Activated CD8-positive, alpha-beta T cell treated with anti-CD3 and anti-CD28 coated beads for 36 hours (primary cell): ENCODE measurements at regions of chr6 and their contacts with region 1.

Region 1: GRCh38 chr6:1604158-1605030 is 5.3 kb upstream of the FOXC1 start:
- DNase-seq: peak; percentile 58
- ATAC-seq: peak; percentile 76
- H3K4me3 Mint-ChIP-seq: no peak overlapping the region
- H3K27ac Mint-ChIP-seq: no peak overlapping the region
- H3K4me1 Mint-ChIP-seq: peaks cover 34% of the 10 kb centered on the region
- H3K27me3 Mint-ChIP-seq: peaks cover 78% of the 10 kb centered on the region
- CTCF ChIP-seq: peak; percentile 89

Region 2: DNA sequence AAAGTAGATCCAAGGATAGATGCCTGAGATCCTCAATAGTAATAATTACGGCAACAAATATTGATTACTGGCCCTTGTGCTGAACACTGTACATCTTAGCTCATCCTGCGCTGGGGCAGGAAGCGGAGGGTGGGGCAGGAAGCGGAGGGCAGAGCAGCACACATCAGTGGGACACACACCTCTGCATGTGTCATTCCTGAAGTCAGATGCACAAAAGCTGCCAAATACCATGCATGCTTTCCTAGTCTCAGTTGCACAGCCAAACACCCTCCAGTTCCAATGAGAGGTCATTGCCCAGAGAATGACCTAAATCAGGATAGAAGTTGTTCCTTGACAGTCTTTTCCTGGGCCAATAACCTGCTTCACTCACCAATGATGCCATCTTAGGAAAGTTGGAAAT is 69.1 kb before region 1 on chr6:
- CTCF ChIA-PET with region 1: no interaction called
- POLR2A ChIA-PET with region 1: no interaction called
- intact Hi-C with region 1: no loop called
- DNase-seq: peak; percentile 33
- ATAC-seq: peak; percentile 60
- H3K4me3 Mint-ChIP-seq: no peak overlapping the region
- H3K27ac Mint-ChIP-seq: no peak overlapping the region
- H3K4me1 Mint-ChIP-seq: peaks cover 6% of the 10 kb centered on the region
- H3K27me3 Mint-ChIP-seq: no peaks in the 10 kb centered on the region
- CTCF ChIP-seq: no peak

Region 3: GRCh38 chr6:1641323-1641885 is 37.0 kb after region 1 on chr6:
- CTCF ChIA-PET with region 1: no interaction called
- POLR2A ChIA-PET with region 1: no interaction called
- intact Hi-C with region 1: no loop called
- DNase-seq: no peak
- ATAC-seq: no peak
- H3K4me3 Mint-ChIP-seq: no peak overlapping the region
- H3K27ac Mint-ChIP-seq: no peak overlapping the region
- H3K4me1 Mint-ChIP-seq: no peaks in the 10 kb centered on the region
- H3K27me3 Mint-ChIP-seq: no peaks in the 10 kb centered on the region
- CTCF ChIP-seq: no peak

Region 4: GRCh38 chr6:1739680-1740079 is 135.3 kb after region 1 on chr6:
- CTCF ChIA-PET with region 1: no interaction called
- POLR2A ChIA-PET with region 1: no interaction called
- intact Hi-C with region 1: no loop called
- DNase-seq: no peak
- ATAC-seq: no peak
- H3K4me3 Mint-ChIP-seq: no peak overlapping the region
- H3K27ac Mint-ChIP-seq: no peak overlapping the region
- H3K4me1 Mint-ChIP-seq: no peaks in the 10 kb centered on the region
- H3K27me3 Mint-ChIP-seq: no peaks in the 10 kb centered on the region
- CTCF ChIP-seq: no peak

Region 5: GRCh38 chr6:2103644-2104523 is 499.5 kb after region 1 on chr6:
- CTCF ChIA-PET with region 1: interaction called, 8 read pairs
- POLR2A ChIA-PET with region 1: no interaction called
- intact Hi-C with region 1: loop called (anchors 5 kb)
- DNase-seq: no peak
- ATAC-seq: peak; percentile 69
- H3K4me3 Mint-ChIP-seq: no peak overlapping the region
- H3K27ac Mint-ChIP-seq: no peak overlapping the region
- H3K4me1 Mint-ChIP-seq: peaks cover 1% of the 10 kb centered on the region
- H3K27me3 Mint-ChIP-seq: no peaks in the 10 kb centered on the region
- CTCF ChIP-seq: peak; percentile 73